ENCODE measurements at regions of chr3 and their contacts with region 1.

Region 1: GRCh38 chr3:129249276-129250065 is at the start of gene COPG1:
- DNase-seq: peak; percentile 97
- CTCF ChIP-seq: no peak

Region 2: GRCh38 chr3:128969993-128970739 is 279.3 kb before region 1 on chr3:
- CTCF ChIA-PET with region 1: interaction called, 108 read pairs
- POLR2A ChIA-PET with region 1: no interaction called
- DNase-seq: peak; percentile 68
- CTCF ChIP-seq: peak; percentile 95

Region 3: GRCh38 chr3:129052675-129053074 is 196.8 kb before region 1 on chr3:
- CTCF ChIA-PET with region 1: interaction called, 168 read pairs
- POLR2A ChIA-PET with region 1: no interaction called
- DNase-seq: no peak
- CTCF ChIP-seq: no peak

Region 4: GRCh38 chr3:129160891-129161859 is 88.3 kb before region 1 on chr3 and contains the start of gene ISY1:
- CTCF ChIA-PET with region 1: interaction called, 29 read pairs
- POLR2A ChIA-PET with region 1: interaction called, 3 read pairs
- DNase-seq: peak; percentile 91
- CTCF ChIP-seq: peak; percentile 81

Region 5: GRCh38 chr3:129211772-129212171 is 37.7 kb before region 1 on chr3:
- CTCF ChIA-PET with region 1: interaction called, 10 read pairs
- POLR2A ChIA-PET with region 1: no interaction called
- DNase-seq: no peak
- CTCF ChIP-seq: no peak

Region 6: GRCh38 chr3:129233538-129233937 is 15.9 kb before region 1 on chr3:
- CTCF ChIA-PET with region 1: interaction called, 50 read pairs
- POLR2A ChIA-PET with region 1: interaction called, 3 read pairs
- DNase-seq: peak; percentile 75
- CTCF ChIP-seq: no peak

Region 7: DNA sequence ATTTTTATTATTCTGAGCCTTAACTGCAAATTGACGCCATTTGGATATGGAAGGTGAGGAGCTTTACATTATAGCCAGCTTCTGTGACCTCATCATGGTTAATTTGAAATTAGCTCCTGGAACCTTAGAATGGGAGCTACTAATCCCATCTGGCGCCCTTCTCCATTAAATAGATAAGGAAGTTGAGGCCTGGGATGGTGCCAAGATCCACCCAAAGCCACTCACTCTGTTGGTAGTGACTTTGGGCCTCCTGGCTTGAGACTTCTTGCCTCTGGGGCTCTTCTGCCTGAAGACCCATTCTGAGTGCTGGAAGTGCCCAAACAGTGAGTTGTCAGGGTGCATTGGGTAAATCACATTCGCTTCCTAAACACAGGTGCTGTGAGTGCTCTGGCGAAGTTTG is 17.2 kb after region 1 on chr3:
- CTCF ChIA-PET with region 1: interaction called, 20 read pairs
- POLR2A ChIA-PET with region 1: no interaction called
- DNase-seq: no peak
- CTCF ChIP-seq: no peak

Region 8: DNA sequence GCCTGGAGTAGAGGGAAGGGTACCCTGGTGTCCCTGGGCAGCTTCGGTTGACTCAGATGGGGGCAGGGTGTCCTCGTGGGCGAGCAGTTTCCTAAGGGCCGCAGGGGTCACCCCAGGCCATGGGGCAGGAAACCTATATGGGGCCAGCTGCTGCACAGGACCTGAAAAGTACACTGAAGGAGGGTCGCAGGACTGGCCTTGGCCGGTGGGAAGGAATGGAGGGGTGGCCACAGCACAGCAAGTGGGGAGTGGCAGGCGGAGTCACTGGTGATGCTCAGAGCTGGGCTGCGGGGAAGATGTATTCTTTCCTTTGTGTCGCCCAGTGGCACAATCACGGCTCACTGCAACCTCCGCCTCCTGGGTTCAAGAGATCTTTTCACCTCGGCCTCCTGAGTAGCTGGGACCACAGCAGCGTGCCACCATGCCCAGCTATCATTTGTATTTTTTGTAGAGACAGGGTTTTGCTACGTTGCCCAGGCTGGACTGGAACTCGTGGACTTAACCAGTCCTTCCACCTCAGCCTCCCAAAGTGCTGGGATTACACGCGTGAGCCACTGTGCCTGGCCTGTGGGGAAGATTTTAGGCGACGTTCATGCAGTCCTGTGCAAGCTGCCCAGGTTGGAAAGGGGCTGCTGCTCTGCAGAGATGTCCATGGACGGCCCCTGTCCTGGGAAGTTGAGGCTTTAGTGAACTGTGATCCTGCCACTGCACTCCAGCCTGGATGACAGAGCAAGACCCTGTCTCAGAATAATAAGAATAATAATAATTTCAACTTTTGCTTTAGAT is 121.8 kb after region 1 on chr3:
- CTCF ChIA-PET with region 1: no interaction called
- POLR2A ChIA-PET with region 1: no interaction called
- DNase-seq: no peak
- CTCF ChIP-seq: no peak

Region 9: GRCh38 chr3:130386604-130387263 is 1137.3 kb after region 1 on chr3:
- CTCF ChIA-PET with region 1: no interaction called
- POLR2A ChIA-PET with region 1: no interaction called
- DNase-seq: no peak
- CTCF ChIP-seq: no peak

Measured in GM10248 (cell line).